Ovary (tissue), 10 donors: ENCODE measurements at regions of chr12 and their contacts with region 1.

Region 1: GRCh38 chr12:86860776-86861175 is 604.6 kb upstream of the MGAT4C start:
- DNase-seq: no peak
- H3K4me3 ChIP-seq: no peak overlapping the region
- H3K27ac ChIP-seq: no peak overlapping the region
- H3K4me1 ChIP-seq: no peaks in the 10 kb centered on the region
- H3K27me3 ChIP-seq: no peaks in the 10 kb centered on the region
- CTCF ChIP-seq: no peak
- EP300 ChIP-seq: no peak
- POLR2A ChIP-seq: no peak

Region 2: GRCh38 chr12:86264451-86265342 is 596.1 kb before region 1 on chr12:
- intact Hi-C with region 1: loop called in 1 of 4 experiments (anchors 5 kb)
- DNase-seq: peak in 1 of 5 donors; percentile 5
- H3K4me3 ChIP-seq: no peak overlapping the region
- H3K27ac ChIP-seq: no peak overlapping the region
- H3K4me1 ChIP-seq: no peaks in the 10 kb centered on the region
- H3K27me3 ChIP-seq: no peaks in the 10 kb centered on the region
- CTCF ChIP-seq: no peak
- EP300 ChIP-seq: no peak
- POLR2A ChIP-seq: no peak

Region 3: GRCh38 chr12:86572455-86572854 is 288.3 kb before region 1 on chr12:
- intact Hi-C with region 1: no loop called
- DNase-seq: no peak
- H3K4me3 ChIP-seq: no peak overlapping the region
- H3K27ac ChIP-seq: no peak overlapping the region
- H3K4me1 ChIP-seq: no peaks in the 10 kb centered on the region
- H3K27me3 ChIP-seq: no peaks in the 10 kb centered on the region
- CTCF ChIP-seq: no peak
- EP300 ChIP-seq: no peak
- POLR2A ChIP-seq: no peak

Region 4: GRCh38 chr12:86826051-86826450 is 34.7 kb before region 1 on chr12:
- intact Hi-C with region 1: no loop called
- DNase-seq: no peak
- H3K4me3 ChIP-seq: no peak overlapping the region
- H3K27ac ChIP-seq: no peak overlapping the region
- H3K4me1 ChIP-seq: no peaks in the 10 kb centered on the region
- H3K27me3 ChIP-seq: no peaks in the 10 kb centered on the region
- CTCF ChIP-seq: no peak
- EP300 ChIP-seq: no peak
- POLR2A ChIP-seq: no peak